SK-N-SH (cell line): ENCODE measurements at regions of chr10 and their contacts with region 1.

Region 1: DNA sequence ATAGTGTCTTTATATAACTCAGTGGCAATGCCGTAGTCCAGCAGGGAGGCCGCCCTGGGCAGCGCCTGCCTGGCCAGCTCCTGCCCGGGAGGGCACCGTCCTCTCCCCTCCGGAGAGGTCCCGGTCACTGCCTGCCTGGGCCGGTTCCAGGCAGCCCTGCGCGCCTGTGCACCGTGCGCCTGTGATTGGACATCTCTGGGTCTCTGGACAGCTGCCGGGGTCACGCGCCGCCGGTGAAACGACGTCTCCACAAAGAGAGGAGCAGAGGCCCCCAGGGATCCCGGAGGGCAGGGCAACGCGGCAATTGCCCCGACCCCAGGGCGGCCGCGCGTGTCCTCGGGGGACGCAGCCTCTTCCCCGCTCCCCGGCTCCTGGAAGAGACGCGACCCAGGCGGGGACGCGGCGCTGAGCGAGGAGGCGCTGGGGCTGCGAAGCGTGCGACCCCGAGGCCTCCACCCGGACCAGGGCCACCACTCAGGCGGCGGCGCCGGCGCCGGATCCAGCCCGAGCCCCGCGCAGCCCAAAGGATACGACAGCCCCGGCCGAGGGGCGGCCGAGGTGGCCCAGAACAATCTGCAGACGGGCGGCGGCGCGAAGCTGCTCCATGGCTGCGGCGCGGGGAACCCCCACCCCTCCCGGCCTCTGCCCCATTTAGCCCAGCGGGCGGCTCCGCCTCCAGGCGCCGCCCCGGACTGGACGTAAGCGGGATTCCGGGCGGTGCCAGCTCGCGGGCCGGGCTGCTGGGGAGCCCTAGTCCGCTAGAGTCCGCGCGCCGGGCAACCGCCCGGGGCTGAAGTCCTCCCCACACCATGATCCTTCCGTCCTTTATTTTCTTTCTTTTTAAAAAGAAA is at the start of gene PHYH:
- DNase-seq: peak; percentile 93
- H3K4me3 ChIP-seq: peak within 1 kb of the TSS; percentile 58 to 82
- H3K27ac ChIP-seq: peak within 1 kb of the TSS; percentile 72 to 82
- H3K4me1 ChIP-seq: peaks cover 6 to 7% of the 10 kb centered on the region in 2 experiments; a peak in 3 of 4 replicates
- H3K27me3 ChIP-seq: no peaks in the 10 kb centered on the region
- CTCF ChIP-seq: no peak
- EP300 ChIP-seq: no peak
- RAD21 ChIP-seq: no peak
- polyA plus RNA-seq, gene PHYH: 15.6 and 16.2 TPM in 2 replicates

Region 2: DNA sequence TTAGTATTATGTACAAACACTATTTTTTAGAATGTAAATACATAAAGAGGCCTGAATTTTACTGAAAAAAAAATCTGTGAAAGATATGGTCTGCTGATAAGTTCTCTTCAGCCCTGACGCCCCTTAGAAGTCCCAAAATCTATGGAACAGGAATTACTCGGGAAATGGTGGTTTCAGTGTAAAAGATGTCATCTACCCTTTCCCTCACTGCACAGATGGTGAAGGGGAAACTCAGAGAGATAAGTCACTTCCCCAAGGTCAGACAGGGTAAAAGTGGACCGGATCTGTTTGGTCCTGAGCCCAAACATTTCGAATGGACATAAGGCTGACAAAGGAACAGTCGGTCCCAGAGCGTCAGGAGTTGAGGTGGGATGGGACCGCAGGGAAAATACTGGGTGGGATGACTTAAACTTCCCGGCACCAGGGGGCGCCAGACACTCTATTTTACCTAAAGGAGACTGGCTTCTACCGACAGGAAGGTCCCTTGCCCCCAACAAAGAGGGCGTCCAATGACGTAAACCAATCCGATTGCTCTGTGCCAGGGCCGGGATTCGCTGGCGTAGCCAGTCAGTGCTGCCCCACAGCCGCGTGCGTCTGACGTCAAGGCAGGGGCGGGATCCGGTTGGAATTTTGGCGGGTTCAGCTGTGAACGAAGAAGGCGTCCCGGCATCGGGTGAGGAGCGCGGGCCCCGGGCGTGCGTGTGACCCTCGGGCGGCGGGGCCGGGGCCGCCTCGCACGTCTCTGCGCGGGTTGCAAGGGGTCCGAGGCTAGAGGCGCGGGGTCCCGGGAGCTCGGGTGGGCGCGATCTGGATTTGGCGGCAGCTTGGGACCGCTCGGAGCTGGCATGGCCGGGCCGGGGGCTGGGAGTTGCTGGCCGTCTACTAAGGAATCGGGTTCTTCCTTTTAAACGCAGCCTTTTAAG is 138.5 kb before region 1 on chr10 and contains the start of gene MCM10:
- CTCF ChIA-PET with region 1: interaction called, 62 read pairs
- POLR2A ChIA-PET with region 1: interaction called, 7 read pairs
- DNase-seq: peak; percentile 96
- H3K4me3 ChIP-seq: peak within 1 kb of the TSS; percentile 73 to 74
- H3K27ac ChIP-seq: peak within 1 kb of the TSS in 1 of 2 experiments; percentile 58; a peak in 1 of 4 replicates
- H3K4me1 ChIP-seq: peaks cover 0 to 9% of the 10 kb centered on the region in 2 experiments; a peak in 2 of 4 replicates
- H3K27me3 ChIP-seq: no peaks in the 10 kb centered on the region
- CTCF ChIP-seq: peak; percentile 83
- EP300 ChIP-seq: peak in 1 of 2 experiments; percentile 17; a peak in 1 of 4 replicates
- RAD21 ChIP-seq: peak; percentile 80
- polyA plus RNA-seq, gene MCM10: 5.1 and 5.5 TPM in 2 replicates

Region 3: DNA sequence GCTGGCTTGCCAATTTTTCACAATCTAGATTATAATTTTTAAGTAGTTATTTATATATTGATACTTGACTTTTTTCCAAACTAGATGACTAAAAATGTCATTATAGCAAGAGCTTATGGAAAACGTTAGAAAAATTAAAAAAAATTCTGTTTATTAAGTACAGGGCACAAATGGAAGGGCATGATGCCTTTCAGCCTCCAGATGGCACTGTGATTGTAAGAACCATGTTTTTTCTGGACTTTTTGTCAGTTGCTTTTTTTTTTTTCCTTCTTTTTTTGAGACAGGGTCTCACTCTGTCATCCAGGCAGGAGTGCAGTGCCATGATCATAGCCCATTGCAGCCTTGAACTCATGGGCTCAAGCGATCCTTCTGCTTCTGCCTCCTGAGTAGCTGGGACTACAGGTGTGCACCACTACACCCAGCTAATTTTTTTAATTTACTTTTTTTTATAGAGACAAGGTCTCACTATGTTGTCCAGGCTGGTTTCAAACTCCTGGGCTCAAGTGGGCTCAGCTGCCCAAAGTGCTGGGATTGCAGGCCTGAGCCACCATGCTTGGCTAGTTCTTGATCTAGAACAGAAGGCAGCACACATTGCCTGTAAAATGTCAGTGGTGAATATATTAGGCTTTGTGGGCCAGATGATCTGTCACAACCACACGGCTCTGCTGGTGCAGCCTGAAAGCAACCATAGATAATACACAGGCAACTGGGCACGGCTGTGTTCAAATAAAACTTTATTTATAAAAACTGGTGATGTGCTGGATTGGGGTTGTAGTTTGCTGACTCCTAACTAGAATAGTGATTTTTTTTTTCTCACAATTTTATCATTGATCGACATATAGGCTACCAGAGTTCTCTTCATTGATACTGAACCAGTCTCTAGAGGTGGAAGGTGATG is 92.9 kb before region 1 on chr10:
- CTCF ChIA-PET with region 1: interaction called, 106 read pairs
- POLR2A ChIA-PET with region 1: interaction called, 6 read pairs
- DNase-seq: peak; percentile 44
- H3K4me3 ChIP-seq: peak overlapping the region in 1 of 2 experiments; percentile 31; a peak in 1 of 4 replicates
- H3K27ac ChIP-seq: no peak overlapping the region
- H3K4me1 ChIP-seq: no peaks in the 10 kb centered on the region
- H3K27me3 ChIP-seq: no peaks in the 10 kb centered on the region
- CTCF ChIP-seq: peak; percentile 70
- EP300 ChIP-seq: no peak
- RAD21 ChIP-seq: peak; percentile 74

Region 4: DNA sequence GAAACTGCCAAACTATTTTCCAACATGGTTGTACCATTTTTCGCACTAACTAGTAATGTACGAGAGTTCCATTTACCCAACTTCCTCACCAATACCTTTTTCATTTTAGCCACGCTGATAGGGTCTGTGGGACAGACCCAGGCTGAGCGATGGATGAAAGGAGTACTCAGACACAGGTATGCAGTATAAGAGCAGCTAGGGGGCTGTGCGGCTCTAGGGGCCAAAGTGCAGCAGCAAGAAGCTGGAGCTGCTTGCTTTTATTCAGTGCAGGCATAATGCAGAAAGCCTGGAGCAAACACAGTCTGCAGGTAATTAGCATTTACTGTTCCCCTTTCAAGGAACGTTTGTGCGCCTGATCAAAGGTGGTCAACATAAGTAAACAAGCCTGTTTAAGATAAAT is 86.5 kb before region 1 on chr10:
- CTCF ChIA-PET with region 1: interaction called, 106 read pairs
- POLR2A ChIA-PET with region 1: interaction called, 6 read pairs
- DNase-seq: no peak
- H3K4me3 ChIP-seq: no peak overlapping the region
- H3K27ac ChIP-seq: no peak overlapping the region
- H3K4me1 ChIP-seq: no peaks in the 10 kb centered on the region
- H3K27me3 ChIP-seq: no peaks in the 10 kb centered on the region
- CTCF ChIP-seq: no peak
- EP300 ChIP-seq: no peak
- RAD21 ChIP-seq: no peak

Region 5: DNA sequence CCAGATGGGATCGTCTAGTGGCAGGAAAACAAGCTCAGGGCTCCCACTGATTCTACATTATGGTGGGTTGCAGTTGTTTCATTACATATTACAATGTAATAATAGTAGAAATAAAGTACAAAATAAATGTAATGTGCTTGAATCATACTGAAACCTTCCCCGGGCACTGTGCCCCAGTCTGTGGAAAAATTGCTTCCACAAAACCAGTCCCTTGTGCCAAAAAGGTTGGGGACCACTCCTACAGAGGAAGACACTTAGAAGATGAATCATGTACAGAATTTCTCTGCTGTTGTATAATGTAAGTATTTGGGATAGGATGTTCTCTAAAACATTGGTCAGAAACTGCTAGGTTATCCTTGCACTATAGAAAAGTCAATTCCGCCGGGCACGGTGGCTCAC is 11.5 kb after region 1 on chr10:
- CTCF ChIA-PET with region 1: interaction called, 20 read pairs
- POLR2A ChIA-PET with region 1: no interaction called
- DNase-seq: no peak
- H3K4me3 ChIP-seq: no peak overlapping the region
- H3K27ac ChIP-seq: no peak overlapping the region
- H3K4me1 ChIP-seq: no peaks in the 10 kb centered on the region
- H3K27me3 ChIP-seq: no peaks in the 10 kb centered on the region
- CTCF ChIP-seq: no peak
- EP300 ChIP-seq: no peak
- RAD21 ChIP-seq: no peak

Region 6: GRCh38 chr10:13317474-13317873 is 17.8 kb after region 1 on chr10:
- CTCF ChIA-PET with region 1: interaction called, 20 read pairs
- POLR2A ChIA-PET with region 1: no interaction called
- DNase-seq: no peak
- H3K4me3 ChIP-seq: no peak overlapping the region
- H3K27ac ChIP-seq: no peak overlapping the region
- H3K4me1 ChIP-seq: no peaks in the 10 kb centered on the region
- H3K27me3 ChIP-seq: no peaks in the 10 kb centered on the region
- CTCF ChIP-seq: no peak
- EP300 ChIP-seq: no peak
- RAD21 ChIP-seq: no peak

Region 7: DNA sequence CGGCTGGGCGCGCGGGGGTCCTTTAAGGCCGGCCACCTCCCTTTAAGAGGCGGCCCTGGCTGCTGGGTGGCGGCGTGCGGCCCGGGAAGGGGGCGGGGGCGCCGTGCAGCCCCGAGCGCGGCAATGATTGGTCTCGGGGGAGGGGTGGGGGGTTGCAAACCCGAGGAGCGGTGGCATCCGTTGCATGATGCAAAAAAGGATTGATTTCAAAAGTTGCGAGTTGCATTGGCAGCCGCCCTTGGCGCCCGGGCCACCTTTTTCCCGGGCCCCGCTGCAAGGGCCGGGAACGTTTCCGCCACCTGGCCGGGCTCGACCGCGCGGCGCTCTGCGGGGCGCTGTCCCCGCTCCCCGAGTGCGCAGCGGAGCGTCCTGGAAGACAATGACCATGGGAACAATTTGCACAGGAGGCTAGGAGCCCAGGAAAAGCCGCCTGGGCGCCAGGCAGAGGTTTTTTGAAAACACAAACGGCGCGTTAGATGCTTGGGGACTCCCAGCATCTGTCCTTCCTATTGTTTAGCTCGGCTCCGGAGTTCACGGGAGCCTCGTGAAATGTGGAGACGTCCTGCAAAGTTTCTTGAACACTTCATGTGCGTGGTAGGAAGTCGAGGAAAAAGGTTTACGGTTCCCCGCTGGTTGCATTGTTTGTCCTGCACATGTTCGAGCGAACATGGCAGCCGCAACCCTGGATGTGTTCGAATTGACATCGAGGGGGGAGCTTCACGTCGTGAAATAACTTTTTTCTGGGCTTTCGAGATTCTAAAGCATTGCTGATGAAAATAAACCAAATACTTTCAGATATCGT is 48.8 kb after region 1 on chr10 and contains the start of gene SEPHS1:
- CTCF ChIA-PET with region 1: interaction called, 10 read pairs
- POLR2A ChIA-PET with region 1: interaction called, 4 read pairs
- DNase-seq: peak; percentile 97
- H3K4me3 ChIP-seq: peak within 1 kb of the TSS; percentile 79
- H3K27ac ChIP-seq: peak within 1 kb of the TSS; percentile 81 to 99
- H3K4me1 ChIP-seq: peaks cover 0 to 17% of the 10 kb centered on the region in 2 experiments; a peak in 2 of 4 replicates
- H3K27me3 ChIP-seq: no peaks in the 10 kb centered on the region
- CTCF ChIP-seq: no peak; the same call in 1 of the 2 replicates
- EP300 ChIP-seq: peak; percentile 25 to 56; a peak in 1 of 4 replicates
- RAD21 ChIP-seq: no peak
- polyA plus RNA-seq, gene SEPHS1: 64.8 and 79.8 TPM in 2 replicates

Region 8: DNA sequence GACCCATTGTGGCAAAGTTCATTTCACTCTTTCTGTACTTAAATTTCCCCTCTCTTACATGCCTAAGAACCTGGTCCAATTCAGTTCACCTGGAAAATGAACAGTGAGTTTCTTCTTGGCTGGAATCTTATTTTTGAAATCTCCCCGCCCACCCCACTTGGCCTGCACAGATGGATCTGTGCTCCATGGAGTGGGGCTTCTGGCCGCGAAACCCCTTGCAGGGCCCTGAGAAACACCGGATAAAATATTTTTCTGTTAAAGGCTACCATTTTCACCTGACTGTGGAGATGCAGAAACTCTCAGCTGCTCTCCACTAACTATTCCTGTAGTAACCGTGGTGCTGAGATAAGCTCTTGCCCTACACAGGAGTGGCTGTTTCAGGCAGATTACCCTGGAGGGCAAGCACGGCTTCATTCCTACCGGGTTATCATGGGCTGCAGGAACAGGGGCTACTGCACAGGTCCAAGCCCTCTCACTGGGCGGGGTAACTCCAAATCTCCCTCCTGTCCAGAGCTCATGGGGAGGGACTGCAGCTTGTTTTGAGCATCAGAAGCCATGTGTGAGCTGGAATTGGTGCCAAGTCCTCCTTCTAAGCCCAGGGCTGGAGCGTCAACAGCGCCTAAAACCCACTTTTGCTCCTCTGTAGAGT is 406.0 kb after region 1 on chr10:
- CTCF ChIA-PET with region 1: no interaction called
- POLR2A ChIA-PET with region 1: no interaction called
- DNase-seq: no peak
- H3K4me3 ChIP-seq: no peak overlapping the region
- H3K27ac ChIP-seq: no peak overlapping the region
- H3K4me1 ChIP-seq: peaks cover 5 to 29% of the 10 kb centered on the region in 2 experiments; a peak in 2 of 4 replicates
- H3K27me3 ChIP-seq: no peaks in the 10 kb centered on the region
- CTCF ChIP-seq: no peak
- EP300 ChIP-seq: no peak
- RAD21 ChIP-seq: no peak